ENCODE measurements at regions of chr11 and their contacts with region 1.

Region 1: DNA sequence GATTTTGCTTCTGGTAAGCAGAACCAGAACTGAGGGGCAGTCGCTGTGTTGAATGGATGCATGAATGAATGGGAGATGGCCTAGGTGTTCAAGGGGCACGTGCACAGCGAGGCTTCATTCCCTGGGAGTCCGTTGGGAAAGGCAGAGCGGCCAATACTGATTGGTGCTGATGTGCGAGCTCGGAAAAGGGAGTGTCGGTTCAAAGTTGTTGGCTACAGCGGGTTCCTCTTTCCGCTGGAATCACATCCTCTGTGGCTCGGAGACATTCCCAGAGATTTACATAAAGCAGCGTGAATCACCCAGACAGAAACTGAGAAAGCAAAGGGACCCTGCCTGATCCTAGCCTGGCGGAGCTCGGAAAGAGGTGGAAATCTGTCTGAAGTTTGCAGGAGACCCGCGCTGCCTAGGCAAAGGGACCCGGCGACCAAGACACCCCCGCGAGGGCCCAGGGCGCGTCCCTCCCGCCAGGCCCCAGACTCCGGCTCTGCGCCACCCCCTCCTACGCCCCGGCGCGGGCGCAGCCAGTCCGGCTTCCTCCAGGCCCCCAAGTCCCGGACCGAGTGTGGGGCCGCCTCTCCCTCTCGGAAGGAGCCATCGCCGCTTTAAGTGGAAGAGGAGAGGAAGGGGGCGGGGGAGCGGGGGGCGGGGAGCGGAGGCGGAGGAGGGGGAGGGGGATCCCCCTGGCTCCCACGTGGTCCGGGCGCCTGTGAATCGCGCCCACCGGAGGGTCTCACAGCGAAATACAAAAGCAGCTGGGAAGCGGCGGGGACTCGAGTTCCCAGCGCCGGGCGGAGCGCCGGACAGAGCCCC is at the start of gene FJX1:
- DNase-seq: peak; percentile 95
- ATAC-seq: peak; percentile 68
- H3K4me3 ChIP-seq: peak within 1 kb of the TSS; percentile 67
- H3K27ac ChIP-seq: peak within 1 kb of the TSS; percentile 90
- H3K4me1 ChIP-seq: peaks cover 9% of the 10 kb centered on the region
- H3K27me3 ChIP-seq: no peaks in the 10 kb centered on the region
- CTCF ChIP-seq: no peak
- POLR2A ChIP-seq: peak; percentile 79
- RAD21 ChIP-seq: peak; percentile 26; the same call in 1 of the 2 replicates
- total RNA-seq, gene FJX1: 8.1 and 8.4 TPM in 2 replicates

Region 2: DNA sequence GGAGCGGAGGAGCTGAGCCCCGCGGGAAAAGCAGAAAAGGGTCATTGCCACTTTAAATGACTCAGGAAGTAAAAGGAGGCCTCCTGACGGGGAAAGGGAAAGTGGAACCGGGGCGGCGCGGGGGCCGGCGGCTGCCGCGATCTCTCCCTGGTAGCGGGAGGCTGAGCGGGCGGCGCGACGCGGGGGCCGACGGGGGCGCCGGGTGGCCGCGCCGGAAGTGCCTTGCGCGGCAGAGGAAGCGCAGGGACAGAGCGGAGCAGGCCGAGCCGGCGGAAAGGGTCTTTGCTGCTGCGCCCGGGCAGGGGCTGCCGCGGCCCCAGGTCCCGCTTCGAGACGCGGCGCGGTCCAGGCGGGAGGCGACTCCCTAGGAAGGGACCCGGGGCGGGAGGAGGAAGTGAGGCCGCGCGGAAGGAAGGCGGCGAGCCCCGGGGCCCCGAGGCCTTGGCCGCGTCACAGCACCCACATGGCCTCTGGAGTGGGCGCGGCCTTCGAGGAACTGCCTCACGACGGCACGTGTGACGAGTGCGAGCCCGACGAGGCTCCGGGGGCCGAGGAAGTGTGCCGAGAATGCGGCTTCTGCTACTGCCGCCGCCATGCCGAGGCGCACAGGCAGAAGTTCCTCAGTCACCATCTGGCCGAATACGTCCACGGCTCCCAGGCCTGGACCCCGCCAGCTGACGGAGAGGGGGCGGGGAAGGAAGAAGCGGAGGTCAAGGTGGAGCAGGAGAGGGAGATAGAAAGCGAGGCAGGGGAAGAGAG is 44.9 kb after region 1 on chr11 and contains the start of gene TRIM44:
- CTCF ChIA-PET with region 1: no interaction called
- POLR2A ChIA-PET with region 1: no interaction called
- dilution Hi-C with region 1: no loop called
- in situ Hi-C with region 1: no loop called
- intact Hi-C with region 1: loop called (anchors 2 kb)
- DNase-seq: peak; percentile 81
- ATAC-seq: peak; percentile 96
- H3K4me3 ChIP-seq: peak within 1 kb of the TSS; percentile 68
- H3K27ac ChIP-seq: peak within 1 kb of the TSS; percentile 94
- H3K4me1 ChIP-seq: peaks cover 11% of the 10 kb centered on the region
- H3K27me3 ChIP-seq: no peaks in the 10 kb centered on the region
- CTCF ChIP-seq: no peak
- POLR2A ChIP-seq: peak; percentile 79
- RAD21 ChIP-seq: no peak
- total RNA-seq, gene TRIM44: 99.4 and 104 TPM in 2 replicates

Region 3: DNA sequence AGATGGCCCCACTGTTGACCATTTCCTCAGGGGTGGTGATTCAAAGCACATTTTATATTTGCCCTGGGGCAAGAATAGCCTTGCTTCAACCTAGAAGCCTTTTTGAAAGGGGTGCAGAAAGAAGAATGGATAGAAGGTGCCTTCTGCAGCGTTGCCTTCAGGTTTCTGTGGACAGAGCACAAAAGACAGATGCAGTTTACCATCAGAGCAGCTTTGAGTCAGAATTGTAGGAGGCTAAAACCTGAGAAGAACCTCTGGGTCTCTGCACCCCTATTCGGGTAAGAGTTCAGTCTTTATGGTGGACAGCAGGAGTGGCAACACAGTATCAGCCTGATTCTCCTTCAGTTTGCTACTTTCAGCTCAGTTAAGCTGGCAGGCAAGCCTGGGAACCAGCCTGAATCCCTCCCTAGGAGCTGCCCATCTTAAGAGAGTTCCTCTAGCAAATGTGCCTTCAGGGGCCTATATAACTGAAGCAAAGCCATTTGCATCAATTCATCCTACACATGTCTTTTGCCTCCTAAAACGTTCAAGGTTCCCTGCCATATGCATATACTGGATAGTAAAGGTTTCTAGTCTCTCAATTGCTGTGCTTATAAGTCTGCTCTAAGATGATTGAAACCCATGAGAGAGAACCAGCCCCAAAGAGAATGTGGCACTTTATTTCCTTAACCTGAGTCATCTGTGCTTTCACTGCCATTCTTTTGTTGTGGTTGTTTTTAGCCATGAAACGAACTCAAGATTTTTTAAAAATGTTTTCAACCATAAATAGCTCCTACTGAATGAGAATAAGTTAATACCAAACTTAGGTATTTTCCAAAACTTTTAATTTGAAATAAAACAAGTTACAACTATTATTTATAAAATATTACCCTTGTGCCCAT is 167.6 kb after region 1 on chr11:
- CTCF ChIA-PET with region 1: no interaction called
- POLR2A ChIA-PET with region 1: no interaction called
- dilution Hi-C with region 1: no loop called
- in situ Hi-C with region 1: no loop called
- intact Hi-C with region 1: loop called (anchors 5 kb)
- DNase-seq: no peak
- ATAC-seq: no peak
- H3K4me3 ChIP-seq: no peak overlapping the region
- H3K27ac ChIP-seq: no peak overlapping the region
- H3K4me1 ChIP-seq: peaks cover 15% of the 10 kb centered on the region
- H3K27me3 ChIP-seq: no peaks in the 10 kb centered on the region
- CTCF ChIP-seq: no peak
- POLR2A ChIP-seq: no peak
- RAD21 ChIP-seq: no peak

Region 4: DNA sequence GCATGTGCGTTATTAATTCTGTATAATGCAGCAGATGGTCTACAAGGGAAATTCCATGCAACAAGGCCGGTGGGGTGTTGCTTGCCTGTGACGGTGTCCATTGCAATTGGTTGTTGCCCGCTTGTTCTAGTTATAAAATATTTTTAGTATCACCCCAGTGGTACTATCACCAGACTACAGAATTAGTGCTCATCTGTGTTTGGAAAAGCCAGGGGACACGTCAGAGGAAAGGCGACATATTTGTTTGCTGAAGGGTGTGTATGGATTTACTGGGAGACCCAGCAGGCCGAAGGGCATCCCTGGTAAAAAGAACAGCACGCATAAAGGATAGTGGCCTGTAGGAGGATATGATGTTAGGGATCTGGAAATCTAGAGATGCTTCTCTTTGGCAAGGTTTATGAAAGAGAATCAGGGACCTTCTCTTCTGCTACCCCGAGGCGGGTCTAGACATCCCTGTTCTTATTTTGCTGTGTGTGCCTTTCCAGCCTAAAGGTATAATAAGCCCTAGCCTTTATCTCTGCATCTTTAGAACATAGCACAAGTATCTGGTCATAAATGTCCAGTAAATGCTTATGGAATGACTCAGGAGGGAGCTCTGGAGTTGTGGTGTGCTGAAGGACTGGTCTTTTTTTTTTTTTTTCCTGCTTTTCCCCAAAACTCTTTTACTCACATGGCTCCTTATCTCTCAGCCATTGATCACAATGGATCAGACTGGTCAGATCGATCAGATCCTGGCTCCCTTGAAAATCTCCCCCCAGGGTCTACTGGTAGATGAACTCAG is 416.8 kb after region 1 on chr11:
- CTCF ChIA-PET with region 1: interaction called, 4 read pairs
- POLR2A ChIA-PET with region 1: no interaction called
- dilution Hi-C with region 1: no loop called
- in situ Hi-C with region 1: no loop called
- intact Hi-C with region 1: loop called (anchors 5 kb)
- DNase-seq: peak; percentile 90
- ATAC-seq: peak; percentile 90
- H3K4me3 ChIP-seq: no peak overlapping the region
- H3K27ac ChIP-seq: no peak overlapping the region; the same call in 1 of the 2 replicates
- H3K4me1 ChIP-seq: peaks cover 25% of the 10 kb centered on the region
- H3K27me3 ChIP-seq: no peaks in the 10 kb centered on the region
- CTCF ChIP-seq: no peak
- POLR2A ChIP-seq: no peak
- RAD21 ChIP-seq: peak; percentile 40

Region 5: GRCh38 chr11:36258730-36259360 is 641.0 kb after region 1 on chr11:
- CTCF ChIA-PET with region 1: interaction called, 4 read pairs
- POLR2A ChIA-PET with region 1: no interaction called
- dilution Hi-C with region 1: no loop called
- in situ Hi-C with region 1: loop called (anchors 5 kb)
- intact Hi-C with region 1: loop called (anchors 2 kb)
- DNase-seq: peak; percentile 77
- ATAC-seq: peak; percentile 94
- H3K4me3 ChIP-seq: no peak overlapping the region
- H3K27ac ChIP-seq: no peak overlapping the region
- H3K4me1 ChIP-seq: no peaks in the 10 kb centered on the region
- H3K27me3 ChIP-seq: peaks cover 35% of the 10 kb centered on the region
- CTCF ChIP-seq: peak; percentile 79
- POLR2A ChIP-seq: no peak
- RAD21 ChIP-seq: peak; percentile 84

Region 6: DNA sequence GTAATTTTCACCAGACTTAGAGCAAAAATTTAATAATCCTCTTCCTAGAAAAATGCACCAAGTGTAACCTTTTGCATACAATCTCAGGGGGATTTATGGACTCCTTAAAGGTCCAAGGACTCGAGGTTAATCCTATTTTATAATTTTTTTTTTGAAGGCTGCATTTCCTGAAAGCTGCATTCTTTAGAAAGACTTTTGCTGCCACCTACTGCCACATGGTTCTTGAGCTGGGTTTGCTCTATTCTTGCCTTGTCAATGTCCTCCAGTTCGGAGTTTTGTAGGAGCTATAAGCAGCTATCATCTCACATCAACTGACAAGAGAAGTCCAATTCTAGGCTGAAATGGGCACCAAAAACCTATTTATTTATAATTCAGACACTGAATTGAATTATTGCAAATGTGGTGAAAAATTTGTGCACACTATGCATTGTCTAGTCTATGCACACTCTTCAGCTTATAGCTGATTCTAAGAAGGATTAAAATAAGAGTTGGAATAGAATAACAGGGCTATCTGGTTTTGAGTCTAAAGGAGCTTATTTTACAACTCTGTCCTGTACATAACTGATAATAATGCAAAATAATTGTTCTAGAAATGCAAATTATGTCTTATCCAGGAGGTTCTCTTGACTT is 860.9 kb after region 1 on chr11:
- CTCF ChIA-PET with region 1: no interaction called
- POLR2A ChIA-PET with region 1: no interaction called
- dilution Hi-C with region 1: no loop called
- in situ Hi-C with region 1: loop called (anchors 25 kb)
- intact Hi-C with region 1: loop called (anchors 2 kb)
- DNase-seq: peak; percentile 59
- ATAC-seq: peak; percentile 70
- H3K4me3 ChIP-seq: no peak overlapping the region
- H3K27ac ChIP-seq: no peak overlapping the region
- H3K4me1 ChIP-seq: no peaks in the 10 kb centered on the region
- H3K27me3 ChIP-seq: no peaks in the 10 kb centered on the region
- CTCF ChIP-seq: peak; percentile 85
- POLR2A ChIP-seq: no peak
- RAD21 ChIP-seq: peak; percentile 93